ENCODE measurements at regions of chr3 and their contacts with region 1.

Region 1: GRCh38 chr3:115704661-115705338 is 81.5 kb downstream of the GAP43 start:
- DNase-seq: no peak
- CTCF ChIP-seq: no peak

Region 2: DNA sequence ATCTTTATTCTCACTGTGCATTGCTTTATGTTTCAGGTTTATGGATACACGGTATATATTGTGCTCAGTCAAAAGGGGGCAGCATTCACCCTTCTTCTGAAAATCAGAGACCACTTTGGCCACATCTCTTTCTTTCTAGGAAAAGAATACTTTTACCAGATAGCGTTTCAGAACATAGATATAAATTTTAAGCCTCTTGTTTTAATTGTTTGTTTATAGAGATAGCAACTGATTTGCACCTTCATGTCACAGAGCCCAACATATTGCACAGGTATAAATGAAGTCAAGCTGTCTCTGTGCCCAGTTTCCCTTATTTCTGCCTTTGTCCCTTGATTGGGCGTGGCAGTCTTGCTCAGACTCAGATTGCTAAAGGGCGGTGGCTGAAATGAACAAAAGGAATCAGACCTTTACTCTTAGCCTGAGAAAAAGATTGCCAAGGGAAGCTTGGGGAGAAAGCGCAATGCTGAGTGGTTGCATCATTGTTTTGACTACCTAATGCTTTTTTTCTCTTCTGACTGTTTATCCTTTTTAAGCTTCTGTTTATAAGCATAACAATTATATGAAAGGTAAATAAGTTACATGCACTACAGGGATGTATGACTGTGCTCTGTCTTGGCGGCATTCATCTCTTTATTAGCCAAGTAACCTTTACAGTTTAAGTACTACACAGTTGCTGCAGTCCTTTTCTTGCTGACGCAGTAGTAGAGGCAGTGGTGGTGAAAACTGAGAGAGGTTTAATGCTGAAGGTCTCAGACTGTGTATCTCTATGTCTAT is 486.9 kb before region 1 on chr3:
- in situ Hi-C with region 1: loop called (anchors 10 kb)
- DNase-seq: peak; percentile 29
- CTCF ChIP-seq: peak; percentile 41

Measured in GM13976 (cell line).